Activated CD4-positive, alpha-beta T cell treated with anti-CD3 and anti-CD28 coated beads for 36 hours (primary cell): ENCODE measurements at regions of chr12 and their contacts with region 1.

Region 1: DNA sequence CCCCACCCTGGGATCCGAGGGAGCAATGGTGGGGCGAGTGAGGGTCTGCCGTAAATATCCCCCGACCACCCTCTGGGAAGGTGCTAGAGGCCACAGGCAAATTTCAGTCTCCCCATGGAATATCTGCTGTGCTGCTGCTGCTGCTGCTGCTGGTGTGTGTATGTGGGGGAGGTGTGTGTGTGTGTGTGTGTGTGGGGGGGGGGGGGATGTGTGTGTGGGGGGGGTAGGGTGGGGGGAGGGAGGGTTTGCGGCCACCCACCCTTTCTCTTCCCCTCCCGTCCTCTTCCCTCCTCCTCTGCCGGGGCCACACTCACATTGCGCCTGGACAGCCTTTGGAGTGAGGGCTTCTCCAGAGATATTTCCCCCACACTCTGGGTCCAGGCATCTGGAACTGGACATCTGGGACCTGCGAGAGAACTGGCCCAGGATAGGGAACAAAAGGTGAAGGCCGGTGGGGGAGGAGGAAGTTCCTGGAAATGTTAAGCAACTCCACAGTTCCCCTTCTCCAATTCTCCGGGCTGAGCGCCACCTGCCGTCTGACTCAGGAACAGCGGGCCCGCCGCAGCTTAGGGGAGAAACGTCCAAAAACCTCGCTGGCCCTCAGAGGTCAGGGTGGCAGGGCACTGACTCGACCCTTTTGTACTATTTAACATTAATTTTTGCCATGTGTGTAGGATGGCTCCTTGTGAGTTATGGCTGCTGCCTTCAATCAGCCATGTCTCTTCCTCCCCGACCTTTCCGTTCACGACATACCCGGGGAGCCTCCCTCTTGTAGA is at the start of gene C1RL:
- DNase-seq: peak; percentile 90
- ATAC-seq: peak; percentile 33
- H3K4me3 Mint-ChIP-seq: peak within 1 kb of the TSS; percentile 92
- H3K27ac Mint-ChIP-seq: peak within 1 kb of the TSS; percentile 94
- H3K4me1 Mint-ChIP-seq: peaks cover 43% of the 10 kb centered on the region
- H3K27me3 Mint-ChIP-seq: no peaks in the 10 kb centered on the region
- total RNA-seq, gene C1RL: 17.3 to 18.9 TPM

Region 2: DNA sequence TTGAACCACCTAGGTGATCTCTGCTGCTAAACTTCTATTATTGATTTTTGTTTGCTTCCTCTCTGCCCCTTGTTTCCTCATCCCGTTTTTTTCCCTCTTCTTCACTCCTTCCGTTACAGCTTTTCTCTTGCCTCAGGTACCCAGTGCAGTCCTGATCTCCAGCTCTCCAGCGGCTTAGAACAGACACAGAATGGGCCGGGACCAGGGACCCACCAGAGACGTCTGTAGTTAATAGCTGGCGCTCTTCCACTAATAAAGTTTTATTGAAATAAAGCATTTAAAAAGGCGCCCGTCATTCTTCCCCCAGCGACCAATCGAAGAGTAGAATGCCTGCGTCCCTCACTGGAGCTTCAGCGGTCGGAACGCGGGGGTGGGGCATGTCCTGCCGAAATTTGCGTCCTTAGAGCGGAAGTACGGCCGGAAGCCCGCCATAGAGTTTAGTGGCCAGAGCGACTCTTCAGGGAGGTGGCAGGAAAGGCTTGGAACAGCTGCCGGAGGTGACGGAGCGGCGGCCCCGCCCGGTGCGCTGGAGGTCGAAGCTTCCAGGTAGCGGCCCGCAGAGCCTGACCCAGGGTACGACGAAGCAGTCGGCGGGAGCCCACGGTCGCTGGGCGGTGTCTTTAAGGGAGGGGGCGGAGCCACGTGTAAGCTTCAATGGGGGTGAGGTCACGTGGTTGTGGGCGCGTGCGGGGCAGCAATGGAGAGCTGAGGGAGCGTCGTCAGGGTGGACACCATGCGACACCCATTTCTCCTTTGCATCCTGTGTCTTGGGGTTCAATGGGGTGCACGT is 385.2 kb before region 1 on chr12 and contains the start of gene COPS7A:
- CTCF ChIA-PET with region 1: no interaction called
- POLR2A ChIA-PET with region 1: no interaction called
- intact Hi-C with region 1: loop called in 1 of 2 experiments (anchors 10 kb)
- DNase-seq: peak; percentile 98
- ATAC-seq: peak; percentile 96
- H3K4me3 Mint-ChIP-seq: peak within 1 kb of the TSS; percentile 80
- H3K27ac Mint-ChIP-seq: peak within 1 kb of the TSS; percentile 97
- H3K4me1 Mint-ChIP-seq: peaks cover 18% of the 10 kb centered on the region
- H3K27me3 Mint-ChIP-seq: no peaks in the 10 kb centered on the region
- total RNA-seq, gene COPS7A: 38.3 to 41.6 TPM

Region 3: DNA sequence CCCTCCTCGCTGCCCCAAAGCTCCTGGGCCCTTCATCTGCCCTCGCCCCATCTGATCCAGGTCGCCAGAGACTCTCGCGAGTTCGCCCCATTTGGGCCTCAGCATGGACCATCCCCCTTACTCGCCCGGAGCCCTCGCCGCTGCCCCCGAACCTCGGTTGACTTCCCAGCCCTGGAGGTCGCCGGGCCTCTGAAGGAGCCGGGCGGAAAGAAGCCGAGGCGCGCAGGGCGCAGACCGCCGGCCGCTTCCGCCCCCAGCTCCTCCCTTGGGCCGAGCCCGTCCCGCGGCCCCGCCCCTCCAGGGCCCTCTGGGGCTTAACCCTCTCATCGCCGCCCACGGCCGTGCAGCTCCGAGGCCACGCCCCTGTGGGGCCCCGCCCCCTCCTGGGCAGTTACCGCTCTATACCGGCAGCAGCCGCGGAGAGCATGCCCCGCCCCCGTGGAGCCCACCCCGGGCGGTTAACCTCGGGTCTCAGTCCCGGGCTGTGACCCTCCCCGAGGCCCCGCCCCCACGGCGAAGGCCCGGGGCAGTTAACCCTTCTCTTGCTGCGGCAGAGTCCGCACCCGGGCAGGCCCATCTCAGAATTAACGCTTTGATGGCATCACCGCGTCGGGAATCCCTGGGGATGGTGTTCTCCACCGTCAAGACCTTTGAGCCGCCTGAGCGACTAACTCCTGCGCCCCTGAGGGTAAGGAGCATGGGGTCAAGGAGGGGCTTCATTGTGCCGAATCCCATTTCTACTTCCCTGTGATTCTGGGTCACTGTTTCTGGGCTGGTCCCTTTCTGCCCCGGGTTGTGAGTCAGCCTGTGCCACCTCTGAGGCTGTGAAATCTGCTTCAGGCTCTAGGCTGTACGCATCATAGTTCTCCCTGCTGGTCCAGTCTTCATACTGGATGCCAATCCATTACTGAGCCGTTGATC is 235.6 kb before region 1 on chr12 and contains the start of gene SPSB2:
- CTCF ChIA-PET with region 1: interaction called, 5 read pairs
- POLR2A ChIA-PET with region 1: interaction called, 3 read pairs
- intact Hi-C with region 1: loop called in 1 of 2 experiments (anchors 2 kb)
- DNase-seq: peak; percentile 100
- ATAC-seq: peak; percentile 74
- H3K4me3 Mint-ChIP-seq: peak within 1 kb of the TSS; percentile 93
- H3K27ac Mint-ChIP-seq: peak within 1 kb of the TSS; percentile 86
- H3K4me1 Mint-ChIP-seq: peaks cover 50% of the 10 kb centered on the region
- H3K27me3 Mint-ChIP-seq: no peaks in the 10 kb centered on the region
- total RNA-seq, gene SPSB2: 1.7 to 2.2 TPM

Region 4: DNA sequence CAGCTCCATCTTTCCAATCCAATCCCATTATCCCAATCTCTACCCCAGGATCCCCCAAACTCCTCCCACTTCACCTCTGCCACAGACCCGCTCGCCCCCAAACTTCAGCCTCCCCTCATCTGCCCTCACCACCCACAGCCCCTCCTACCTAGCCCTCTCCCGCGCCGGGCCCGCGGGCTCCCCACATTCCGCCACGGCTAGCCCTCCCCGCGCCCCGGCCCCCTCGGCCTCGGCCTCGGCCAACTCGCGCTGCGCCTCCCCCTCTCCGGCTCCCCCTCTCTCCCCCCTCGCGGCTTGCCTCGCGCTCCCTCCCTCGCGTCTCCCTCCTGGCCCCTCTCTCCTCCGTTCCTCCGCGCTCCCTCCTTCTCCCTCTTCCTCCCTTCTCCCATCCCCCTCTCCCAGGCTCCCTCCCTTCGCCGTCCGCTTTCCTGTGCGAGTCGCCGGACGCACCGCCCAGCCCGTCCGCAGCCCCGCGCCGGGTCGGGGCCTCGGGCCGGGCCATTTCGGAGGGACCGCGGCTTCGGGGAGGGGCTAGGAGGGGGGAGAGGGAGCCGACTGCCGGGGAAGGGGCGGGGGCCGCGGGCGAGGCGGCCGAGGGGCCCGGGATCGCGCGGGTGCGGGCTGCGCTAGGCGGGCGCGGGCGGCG is 181.5 kb before region 1 on chr12 and contains the start of gene ATN1:
- CTCF ChIA-PET with region 1: interaction called, 4 read pairs
- POLR2A ChIA-PET with region 1: no interaction called
- intact Hi-C with region 1: loop called in 1 of 2 experiments (anchors 1 kb)
- DNase-seq: peak; percentile 69
- ATAC-seq: peak; percentile 31
- H3K4me3 Mint-ChIP-seq: peak within 1 kb of the TSS; percentile 83
- H3K27ac Mint-ChIP-seq: peak within 1 kb of the TSS; percentile 84
- H3K4me1 Mint-ChIP-seq: peaks cover 58% of the 10 kb centered on the region
- H3K27me3 Mint-ChIP-seq: no peaks in the 10 kb centered on the region
- total RNA-seq, gene ATN1: 32.2 to 32.4 TPM

Region 5: GRCh38 chr12:6944381-6945186 is 164.4 kb before region 1 on chr12:
- CTCF ChIA-PET with region 1: interaction called, 41 read pairs
- POLR2A ChIA-PET with region 1: interaction called, 34 read pairs
- intact Hi-C with region 1: loop called (anchors 1 to 2 kb)
- DNase-seq: peak; percentile 94
- ATAC-seq: peak; percentile 54
- H3K4me3 Mint-ChIP-seq: peak overlapping the region; percentile 81
- H3K27ac Mint-ChIP-seq: peak overlapping the region; percentile 97
- H3K4me1 Mint-ChIP-seq: peaks cover 59% of the 10 kb centered on the region
- H3K27me3 Mint-ChIP-seq: no peaks in the 10 kb centered on the region

Region 6: DNA sequence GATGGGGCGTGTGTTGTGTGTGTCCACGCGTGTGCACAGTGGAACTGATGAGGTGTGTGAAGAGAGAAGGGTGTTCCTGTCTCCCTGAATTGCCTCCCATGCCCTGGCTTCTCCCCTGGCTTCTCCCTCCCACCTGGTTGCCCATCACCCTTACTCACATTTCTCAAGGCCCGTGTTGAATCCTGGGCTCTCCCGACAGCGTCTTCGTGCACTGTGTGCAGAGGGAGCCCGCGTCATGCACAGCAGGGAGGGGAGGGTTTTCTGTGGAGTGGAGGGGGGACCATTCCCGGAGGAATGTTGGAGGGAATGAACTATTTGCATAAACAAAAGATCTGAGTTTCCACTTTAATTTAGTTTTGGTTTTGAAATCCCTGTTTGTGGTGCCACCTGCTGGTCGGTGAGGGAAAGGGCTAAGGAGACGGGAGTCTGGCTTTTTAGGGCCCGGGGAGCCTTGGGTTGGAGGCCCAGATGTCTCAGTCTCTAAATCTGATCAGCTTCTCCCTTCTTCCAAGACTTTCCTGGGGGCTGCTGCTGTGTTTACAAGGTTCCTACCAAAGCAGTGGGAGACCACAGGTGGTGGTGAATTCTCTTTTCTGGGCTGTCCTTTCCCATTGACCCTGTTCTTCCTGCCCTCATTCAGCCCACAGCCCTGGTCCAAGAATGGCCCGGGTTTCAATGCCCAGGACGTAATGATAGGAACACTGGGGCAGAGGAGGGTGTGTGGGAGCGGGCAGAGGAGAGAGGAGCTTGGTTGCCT is 16.6 kb before region 1 on chr12 and contains the start of gene C1R:
- CTCF ChIA-PET with region 1: interaction called, 21 read pairs
- POLR2A ChIA-PET with region 1: interaction called, 3 read pairs
- intact Hi-C with region 1: no loop called
- DNase-seq: peak; percentile 85
- ATAC-seq: peak; percentile 86
- H3K4me3 Mint-ChIP-seq: peak within 1 kb of the TSS; percentile 59
- H3K27ac Mint-ChIP-seq: peak within 1 kb of the TSS; percentile 80
- H3K4me1 Mint-ChIP-seq: peaks cover 6% of the 10 kb centered on the region
- H3K27me3 Mint-ChIP-seq: no peaks in the 10 kb centered on the region
- total RNA-seq, gene C1R: 1.4 to 2.2 TPM

Region 7: GRCh38 chr12:7129872-7130680 is 21.1 kb after region 1 on chr12 and contains the start of gene CLSTN3:
- CTCF ChIA-PET with region 1: interaction called, 13 read pairs
- POLR2A ChIA-PET with region 1: interaction called, 5 read pairs
- intact Hi-C with region 1: loop called in 1 of 2 experiments (anchors 1 kb)
- DNase-seq: peak; percentile 93
- ATAC-seq: peak; percentile 89
- H3K4me3 Mint-ChIP-seq: peak within 1 kb of the TSS; percentile 80
- H3K27ac Mint-ChIP-seq: peak within 1 kb of the TSS; percentile 74
- H3K4me1 Mint-ChIP-seq: peaks cover 31% of the 10 kb centered on the region
- H3K27me3 Mint-ChIP-seq: no peaks in the 10 kb centered on the region
- total RNA-seq, gene CLSTN3: 28.2 to 37.9 TPM